ENCODE measurements at regions of chr5 and their contacts with region 1.

Region 1: DNA sequence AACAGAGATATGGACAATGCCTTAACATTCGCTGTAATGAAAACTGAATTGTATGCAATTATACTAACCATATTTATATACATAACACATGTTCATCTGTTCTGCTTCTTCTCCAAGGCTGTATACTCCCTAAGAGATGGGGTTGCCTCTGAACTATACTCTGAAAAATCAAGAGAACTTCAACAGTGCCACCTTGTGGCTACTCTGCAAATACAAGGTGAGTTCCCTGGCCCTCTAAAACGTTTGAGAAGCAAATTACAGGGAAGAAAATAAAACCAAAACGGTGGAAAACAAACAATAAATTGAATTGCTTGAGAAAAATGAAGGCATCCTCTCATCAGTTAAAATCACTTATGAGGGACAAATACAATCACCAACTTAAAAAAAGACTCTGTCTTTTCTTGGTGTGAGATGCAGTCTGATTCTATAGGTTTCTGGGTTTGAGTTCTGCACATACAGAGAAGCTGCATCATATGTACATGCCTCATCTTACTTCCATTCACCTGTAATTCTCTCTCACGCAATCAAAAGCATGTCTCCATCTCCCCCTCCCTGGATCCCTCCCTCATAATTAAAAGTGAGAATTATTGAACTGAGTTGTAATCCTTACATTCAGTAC is 98.6 kb downstream of the FBXW11 start:
- DNase-seq: no peak

Region 2: GRCh38 chr5:171418316-171418981 is 489.4 kb before region 1 on chr5:
- intact Hi-C with region 1: loop called in 1 of 2 experiments (anchors 5 kb)
- DNase-seq: peak; percentile 95

Region 3: DNA sequence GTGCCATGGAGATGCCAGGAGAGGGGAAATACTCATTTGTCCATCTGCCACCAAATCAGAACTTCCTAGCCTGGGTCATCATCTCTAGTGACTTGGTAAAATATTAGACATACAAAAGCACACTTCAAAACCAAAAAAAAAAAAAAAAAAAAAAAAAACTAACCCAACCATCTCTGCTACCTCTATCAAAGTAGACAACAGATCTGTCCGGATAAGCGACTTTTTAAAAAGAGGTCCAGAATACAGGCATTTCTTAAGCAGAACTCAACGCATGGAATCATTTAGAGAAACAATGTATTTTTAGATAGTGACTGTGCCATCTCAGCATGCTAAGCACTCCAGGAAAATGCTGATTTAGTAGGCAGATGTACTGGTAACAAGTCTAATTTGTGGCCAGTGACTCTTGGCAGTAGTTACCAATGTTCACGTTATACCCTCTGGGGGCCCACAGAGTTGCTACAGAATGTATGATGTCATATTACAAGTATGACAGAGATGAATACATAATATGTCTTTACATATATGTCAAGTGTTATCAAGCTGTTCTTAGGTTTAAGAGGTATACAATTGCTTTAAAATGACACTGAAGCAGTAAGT is 14.4 kb before region 1 on chr5:
- intact Hi-C with region 1: no loop called
- DNase-seq: no peak

Region 4: DNA sequence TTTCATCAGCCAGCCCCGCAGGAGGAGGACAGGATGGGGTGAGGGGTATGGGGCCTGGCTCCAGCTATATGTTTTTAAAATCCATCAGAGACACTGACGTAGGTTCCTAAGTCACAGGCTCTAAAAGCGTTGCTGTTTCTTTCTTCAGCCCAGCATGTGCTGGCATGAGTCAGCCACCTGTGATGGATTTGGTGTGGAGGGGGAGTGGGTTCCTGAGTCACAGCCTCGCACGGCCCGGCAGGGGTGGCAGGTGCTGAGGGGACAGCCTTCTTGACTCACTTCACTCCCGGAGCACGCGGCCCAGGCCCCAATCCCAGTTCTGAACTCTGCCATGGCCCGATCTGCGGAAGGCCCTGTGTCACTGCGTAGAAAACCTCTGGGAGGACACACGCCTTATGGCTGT is 1012.6 kb after region 1 on chr5:
- intact Hi-C with region 1: loop called in 1 of 2 experiments (anchors 5 kb)
- DNase-seq: no peak

Measured in posterior vena cava (tissue), 2 donors.